ENCODE measurements at regions of chr17 and their contacts with region 1.

Region 1: GRCh38 chr17:39393736-39394135 is 7.7 kb downstream of the FBXL20 start:
- DNase-seq: no peak
- ATAC-seq: no peak
- H3K4me3 ChIP-seq: no peak overlapping the region
- H3K27ac ChIP-seq: no peak overlapping the region
- H3K4me1 ChIP-seq: no peaks in the 10 kb centered on the region
- H3K27me3 ChIP-seq: no peaks in the 10 kb centered on the region
- CTCF ChIP-seq: no peak

Region 2: DNA sequence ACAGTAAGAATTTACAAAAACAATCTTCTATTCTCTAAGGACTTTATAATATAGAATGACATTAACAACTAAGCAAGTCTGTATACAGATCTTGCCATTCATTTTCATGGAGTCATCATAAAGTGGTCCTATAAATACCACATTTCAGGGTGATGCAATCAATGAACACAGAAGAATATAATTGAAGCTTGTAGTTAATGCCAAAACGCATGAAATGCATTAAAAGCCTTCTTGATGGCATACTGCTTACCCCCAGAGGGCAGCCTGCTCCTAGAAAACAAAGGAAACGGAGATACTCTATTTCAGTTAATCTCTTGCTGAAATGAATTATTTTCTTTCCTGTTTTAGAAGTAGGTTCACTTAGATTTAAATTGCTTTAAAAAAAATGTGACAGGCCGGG is 122.8 kb before region 1 on chr17:
- CTCF ChIA-PET with region 1: no interaction called
- POLR2A ChIA-PET with region 1: no interaction called
- intact Hi-C with region 1: loop called (anchors 2 kb)
- DNase-seq: peak; percentile 22
- ATAC-seq: no peak
- H3K4me3 ChIP-seq: no peak overlapping the region
- H3K27ac ChIP-seq: no peak overlapping the region
- H3K4me1 ChIP-seq: no peaks in the 10 kb centered on the region
- H3K27me3 ChIP-seq: no peaks in the 10 kb centered on the region
- CTCF ChIP-seq: peak; percentile 50; the same call in 1 of the 2 replicates

Region 3: DNA sequence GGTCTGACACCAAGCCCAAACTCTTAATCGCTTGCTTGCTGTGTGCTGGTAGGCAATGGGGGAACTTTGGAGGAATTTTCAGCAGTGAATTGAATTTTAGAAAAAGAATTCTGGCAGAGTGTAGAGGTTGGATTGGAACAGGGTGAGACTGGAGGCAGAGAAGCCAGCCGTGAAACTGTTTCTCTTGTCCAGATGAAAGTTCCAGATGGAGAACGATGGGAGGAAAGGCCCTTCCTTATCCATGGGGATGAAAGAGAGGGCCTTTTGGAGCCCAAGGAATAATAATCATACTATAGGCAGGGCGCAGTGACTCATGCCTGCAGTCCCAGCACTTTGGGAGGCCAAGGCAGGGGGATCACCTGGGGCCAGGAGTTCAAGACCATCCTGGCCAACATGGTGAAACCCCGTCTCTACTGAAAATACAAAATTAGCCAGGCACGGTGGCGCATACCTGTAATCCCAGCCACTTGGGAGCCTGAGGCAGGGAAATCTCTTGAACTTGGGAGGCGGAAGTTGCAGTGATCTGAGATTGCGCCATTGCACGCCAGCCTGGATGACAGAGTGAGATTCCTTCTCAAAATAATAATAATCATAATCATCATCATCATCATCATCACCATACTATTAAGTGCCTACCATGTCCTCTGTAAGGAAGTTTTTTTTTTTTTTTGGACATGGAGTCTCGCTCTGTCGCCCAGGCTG is 188.2 kb after region 1 on chr17:
- CTCF ChIA-PET with region 1: no interaction called
- POLR2A ChIA-PET with region 1: no interaction called
- intact Hi-C with region 1: no loop called
- DNase-seq: no peak
- ATAC-seq: no peak
- H3K4me3 ChIP-seq: no peak overlapping the region
- H3K27ac ChIP-seq: no peak overlapping the region
- H3K4me1 ChIP-seq: no peaks in the 10 kb centered on the region
- H3K27me3 ChIP-seq: no peaks in the 10 kb centered on the region
- CTCF ChIP-seq: no peak